Activated CD4-positive, alpha-beta memory T cell treated with anti-CD3 and anti-CD28 coated beads, Interleukin-2, amount 10 ng/mL, durations not matched to agents 7 days and 5 days (primary cell): ENCODE measurements at regions of chr14 and their contacts with region 1.

Region 1: GRCh38 chr14:61837336-61838229 is 75.4 kb downstream of the SNAPC1 start:
- DNase-seq: peak; percentile 81
- H3K4me3 Mint-ChIP-seq: no peak overlapping the region
- H3K27ac Mint-ChIP-seq: no peak overlapping the region
- H3K4me1 Mint-ChIP-seq: peaks cover 5% of the 10 kb centered on the region
- H3K27me3 Mint-ChIP-seq: peaks cover 22% of the 10 kb centered on the region

Region 2: GRCh38 chr14:61269321-61270083 is 568.1 kb before region 1 on chr14:
- CTCF ChIA-PET with region 1: interaction called, 11 read pairs
- POLR2A ChIA-PET with region 1: no interaction called
- DNase-seq: peak; percentile 82
- H3K4me3 Mint-ChIP-seq: no peak overlapping the region
- H3K27ac Mint-ChIP-seq: no peak overlapping the region
- H3K4me1 Mint-ChIP-seq: peaks cover 4% of the 10 kb centered on the region
- H3K27me3 Mint-ChIP-seq: peaks cover 59% of the 10 kb centered on the region

Region 3: GRCh38 chr14:61456720-61457119 is 380.9 kb before region 1 on chr14:
- CTCF ChIA-PET with region 1: interaction called, 22 read pairs
- POLR2A ChIA-PET with region 1: interaction called, 3 read pairs
- DNase-seq: peak; percentile 82
- H3K4me3 Mint-ChIP-seq: no peak overlapping the region
- H3K27ac Mint-ChIP-seq: peak overlapping the region; percentile 33
- H3K4me1 Mint-ChIP-seq: peaks cover 88% of the 10 kb centered on the region
- H3K27me3 Mint-ChIP-seq: no peaks in the 10 kb centered on the region

Region 4: DNA sequence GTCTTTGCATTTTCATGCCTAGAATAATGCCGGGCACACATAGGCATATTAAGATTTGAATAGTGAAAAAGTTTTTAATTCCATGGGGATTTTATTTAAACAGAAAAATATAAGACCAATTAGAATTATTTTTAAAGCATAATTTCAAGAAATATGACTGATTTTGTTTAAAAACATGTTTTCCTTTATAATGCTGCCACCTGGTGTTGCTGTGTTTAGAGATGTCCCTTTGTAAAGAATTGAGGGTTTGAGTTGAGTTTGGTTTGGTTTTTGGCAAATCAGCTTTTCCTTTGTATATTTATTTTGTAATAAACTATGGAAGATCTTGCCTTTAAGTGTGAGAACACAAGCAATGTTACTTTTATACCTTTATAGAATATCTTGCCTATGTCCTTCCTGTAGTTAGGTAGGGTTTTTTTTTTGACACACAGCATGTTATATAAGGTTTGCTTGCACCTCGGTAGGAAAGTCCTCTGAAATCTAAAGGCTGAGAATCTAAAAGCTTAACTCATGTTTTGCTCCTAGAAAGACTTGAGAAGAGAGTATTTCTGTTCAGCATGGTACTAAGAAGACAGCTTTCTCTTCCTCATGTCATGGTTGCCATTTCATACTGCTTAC is 106.7 kb before region 1 on chr14:
- CTCF ChIA-PET with region 1: interaction called, 11 read pairs
- POLR2A ChIA-PET with region 1: no interaction called
- DNase-seq: no peak
- H3K4me3 Mint-ChIP-seq: no peak overlapping the region
- H3K27ac Mint-ChIP-seq: no peak overlapping the region
- H3K4me1 Mint-ChIP-seq: peaks cover 58% of the 10 kb centered on the region
- H3K27me3 Mint-ChIP-seq: no peaks in the 10 kb centered on the region

Region 5: DNA sequence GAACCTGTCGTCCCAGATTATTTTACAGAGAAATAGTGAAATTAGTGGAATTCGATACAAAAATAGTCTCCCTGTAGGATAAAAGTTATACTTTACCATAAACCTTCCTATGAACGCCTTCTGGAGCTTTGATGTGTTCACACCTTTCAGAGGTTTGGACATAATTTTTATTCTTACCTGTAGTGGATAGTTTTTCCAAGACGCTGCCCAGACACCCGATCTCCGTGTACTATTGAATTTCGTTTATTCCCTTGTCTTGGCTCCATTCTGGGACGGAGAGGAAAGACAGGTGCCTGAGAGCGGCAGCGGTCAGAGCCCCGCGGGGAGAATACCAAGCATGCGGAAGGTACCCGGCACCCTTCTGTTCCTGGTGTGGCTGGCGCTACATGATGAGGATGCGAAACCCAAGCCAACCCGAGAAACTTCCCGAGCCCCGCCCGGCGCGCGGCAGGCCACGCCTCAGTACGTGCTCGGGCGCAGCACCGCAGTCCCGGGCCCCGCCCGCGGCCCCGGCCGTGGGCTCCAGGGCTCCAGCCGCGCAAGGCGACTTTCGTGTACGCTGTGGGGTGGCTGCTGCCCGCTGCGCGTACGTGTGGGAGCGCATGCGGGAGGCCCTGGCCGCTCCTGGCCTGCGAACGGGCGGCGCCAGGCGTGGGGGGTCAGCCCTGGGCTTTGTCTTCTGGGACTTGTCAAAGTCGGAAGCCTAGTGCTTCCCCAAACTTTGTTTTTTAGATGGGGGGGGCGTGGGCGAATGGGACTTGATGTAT is 86.7 kb before region 1 on chr14:
- CTCF ChIA-PET with region 1: interaction called, 11 read pairs
- POLR2A ChIA-PET with region 1: no interaction called
- DNase-seq: peak; percentile 88
- H3K4me3 Mint-ChIP-seq: peak overlapping the region; percentile 88
- H3K27ac Mint-ChIP-seq: peak overlapping the region; percentile 71
- H3K4me1 Mint-ChIP-seq: peaks cover 40% of the 10 kb centered on the region
- H3K27me3 Mint-ChIP-seq: peaks cover 6% of the 10 kb centered on the region

Region 6: GRCh38 chr14:62126879-62127478 is 289.4 kb after region 1 on chr14:
- CTCF ChIA-PET with region 1: interaction called, 12 read pairs
- POLR2A ChIA-PET with region 1: no interaction called
- DNase-seq: no peak
- H3K4me3 Mint-ChIP-seq: no peak overlapping the region
- H3K27ac Mint-ChIP-seq: no peak overlapping the region
- H3K4me1 Mint-ChIP-seq: no peaks in the 10 kb centered on the region
- H3K27me3 Mint-ChIP-seq: peaks cover 55% of the 10 kb centered on the region